Activated CD4-positive, alpha-beta T cell treated with anti-CD3 and anti-CD28 coated beads, Interleukin-2, amount 10 ng/mL, durations not matched to agents 24 days and 14 days (primary cell): ENCODE measurements at regions of chr1 and their contacts with region 1.

Region 1: GRCh38 chr1:170929835-170930554 is 5.3 kb upstream of the MROH9 start:
- DNase-seq: peak; percentile 73
- H3K4me3 Mint-ChIP-seq: no peak overlapping the region
- H3K27ac Mint-ChIP-seq: no peak overlapping the region
- H3K4me1 Mint-ChIP-seq: no peaks in the 10 kb centered on the region
- H3K27me3 Mint-ChIP-seq: peaks cover 4% of the 10 kb centered on the region

Region 2: GRCh38 chr1:170670802-170671628 is 259.0 kb before region 1 on chr1:
- intact Hi-C with region 1: loop called (anchors 5 kb)
- DNase-seq: peak; percentile 74
- H3K4me3 Mint-ChIP-seq: no peak overlapping the region
- H3K27ac Mint-ChIP-seq: no peak overlapping the region
- H3K4me1 Mint-ChIP-seq: peaks cover 10% of the 10 kb centered on the region
- H3K27me3 Mint-ChIP-seq: peaks cover 78% of the 10 kb centered on the region

Region 3: DNA sequence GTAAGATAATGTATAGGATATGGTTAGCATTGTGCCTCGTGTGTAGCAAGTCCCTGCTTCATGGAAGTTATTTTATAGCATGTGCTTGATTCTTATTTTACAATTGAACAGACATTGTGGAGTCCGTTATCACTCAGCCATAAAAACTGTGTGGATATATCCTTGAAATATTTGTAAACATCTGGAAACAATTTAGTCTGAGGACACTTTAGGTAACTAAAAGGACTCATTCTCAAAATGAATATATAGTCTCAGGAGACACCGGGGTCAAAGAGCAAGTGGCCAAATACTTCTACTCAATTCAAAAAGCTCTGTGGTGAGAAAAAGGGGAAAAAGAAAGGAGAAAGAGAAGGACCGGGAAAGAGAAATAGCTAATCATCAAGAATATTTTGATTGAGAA is 242.4 kb before region 1 on chr1:
- intact Hi-C with region 1: loop called (anchors 2 kb)
- DNase-seq: no peak
- H3K4me3 Mint-ChIP-seq: no peak overlapping the region
- H3K27ac Mint-ChIP-seq: no peak overlapping the region
- H3K4me1 Mint-ChIP-seq: peaks cover 2% of the 10 kb centered on the region
- H3K27me3 Mint-ChIP-seq: peaks cover 17% of the 10 kb centered on the region

Region 4: DNA sequence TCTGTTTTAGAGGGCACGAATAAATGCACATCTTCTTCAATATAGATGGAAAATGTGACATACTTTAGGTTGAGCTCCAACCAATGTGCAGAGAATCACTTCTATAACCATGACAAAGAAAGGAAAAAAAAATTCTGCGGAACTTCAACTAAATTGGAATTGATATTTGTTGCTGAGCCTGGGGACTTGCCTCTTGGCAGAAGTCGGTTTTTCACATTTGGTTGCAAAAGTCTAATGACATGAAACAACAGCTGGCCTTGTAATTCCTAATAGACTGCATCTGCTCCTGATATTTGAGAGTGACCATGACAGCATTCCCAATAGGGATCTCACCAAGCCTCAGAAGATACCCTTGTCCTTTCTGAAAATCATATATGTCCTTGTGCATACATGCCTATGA is 153.2 kb before region 1 on chr1:
- intact Hi-C with region 1: no loop called
- DNase-seq: no peak
- H3K4me3 Mint-ChIP-seq: no peak overlapping the region
- H3K27ac Mint-ChIP-seq: no peak overlapping the region
- H3K4me1 Mint-ChIP-seq: no peaks in the 10 kb centered on the region
- H3K27me3 Mint-ChIP-seq: no peaks in the 10 kb centered on the region